ENCODE measurements at regions of chr9 and their contacts with region 1.

Region 1: DNA sequence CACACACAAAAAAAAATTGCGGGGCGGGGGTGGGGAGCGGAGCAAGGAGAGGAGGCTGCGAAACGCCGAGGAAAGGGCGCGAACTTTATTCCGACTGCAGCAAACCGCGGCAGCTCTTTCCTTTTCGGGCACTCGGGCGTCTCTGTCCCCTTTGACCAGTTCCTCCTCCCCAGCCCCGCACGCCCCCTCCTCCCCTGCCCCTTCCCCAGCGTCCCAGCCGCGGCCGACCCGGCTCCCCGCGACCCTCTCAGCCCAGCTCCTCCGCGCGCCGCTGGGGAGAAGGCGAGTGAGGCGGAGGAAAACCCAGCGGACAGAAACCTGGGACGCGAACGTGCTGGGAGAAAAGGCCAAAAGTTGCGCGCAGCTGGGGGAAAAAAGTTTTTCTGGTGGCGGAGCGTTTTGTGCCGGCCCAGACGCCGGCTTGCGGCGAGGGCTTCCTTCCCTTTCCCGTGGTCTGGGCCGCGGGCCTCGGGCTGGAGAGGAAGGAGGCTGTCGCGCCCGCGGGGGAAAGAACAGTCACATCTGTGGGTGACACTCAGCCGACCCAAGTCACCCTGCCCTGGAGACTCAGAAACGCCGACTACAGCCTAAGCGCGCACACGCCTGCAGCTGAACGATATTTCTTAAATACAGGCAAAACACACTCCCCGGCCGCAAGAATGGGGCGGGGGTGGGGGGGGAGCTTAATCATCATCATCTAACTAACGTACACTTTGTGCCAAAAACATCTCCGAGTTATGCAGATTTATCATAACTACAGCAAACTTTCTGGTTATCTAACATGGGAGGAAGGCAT is 1.1 kb upstream of the BNC2 start:
- DNase-seq: peak in 1 of 2 donors; percentile 35
- ATAC-seq: peak; percentile 24 to 34
- H3K4me3 ChIP-seq: peak overlapping the region; percentile 71 to 85 (median 76)
- H3K27ac ChIP-seq: peak overlapping the region; percentile 80 to 90 (median 84)
- H3K4me1 ChIP-seq: peaks cover 3 to 9% of the 10 kb centered on the region in 2 donors
- H3K27me3 ChIP-seq: peaks cover 0 to 4% (median 0%) of the 10 kb centered on the region in 3 donors
- CTCF ChIP-seq: no peak
- POLR2A ChIP-seq: peak; percentile 10 to 27

Region 2: DNA sequence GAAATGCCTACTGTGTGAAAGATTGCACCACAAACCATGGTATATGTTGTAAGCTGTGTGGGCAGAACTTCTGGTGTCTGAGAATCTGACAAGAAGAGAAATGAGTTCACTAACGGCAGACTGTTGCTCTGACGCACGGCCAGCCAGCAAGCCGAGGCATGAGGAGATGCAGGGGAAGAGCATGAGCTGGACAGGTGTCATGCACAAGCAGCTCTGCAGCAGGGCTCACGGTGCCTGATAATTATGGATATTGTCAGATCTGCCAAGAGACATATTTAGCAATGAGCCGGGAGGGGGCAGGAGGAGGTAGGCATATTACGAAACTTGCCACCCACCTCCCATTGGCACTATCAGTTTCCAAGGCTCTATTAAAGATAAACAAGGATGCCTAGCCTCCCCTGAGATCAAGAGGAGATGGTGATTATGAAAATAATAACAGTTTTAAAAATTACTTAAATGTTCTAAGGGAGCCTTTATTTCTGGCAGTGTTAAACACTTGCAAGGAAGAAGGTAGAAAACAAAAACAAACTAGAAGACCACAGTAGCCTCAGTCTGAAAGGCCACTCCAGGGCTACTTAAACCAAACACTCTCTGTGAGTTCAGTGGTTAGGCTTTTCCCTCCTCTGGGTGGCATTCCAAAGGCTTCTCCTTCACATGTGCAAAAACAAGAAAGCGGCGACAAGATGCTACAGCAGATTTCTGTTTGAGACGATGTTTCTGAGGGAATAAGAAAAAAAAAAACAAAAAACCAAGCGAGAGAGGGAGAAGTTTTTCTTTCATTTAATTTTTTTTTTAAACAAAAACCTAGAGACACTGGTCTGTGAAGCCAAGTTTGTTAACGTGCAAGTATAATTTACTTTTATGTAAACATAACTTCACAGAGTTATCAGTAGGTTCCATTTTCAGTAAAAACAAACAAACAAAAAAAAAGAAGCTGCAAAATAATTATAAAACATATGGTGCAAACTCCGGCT is 340.6 kb before region 1 on chr9:
- in situ Hi-C with region 1: no loop called
- intact Hi-C with region 1: loop called (anchors 5 kb)
- DNase-seq: peak; percentile 55 to 73
- ATAC-seq: peak; percentile 82 to 90
- H3K4me3 ChIP-seq: no peak overlapping the region
- H3K27ac ChIP-seq: peak overlapping the region; percentile 55 to 69 (median 61)
- H3K4me1 ChIP-seq: peaks cover 0 to 26% of the 10 kb centered on the region in 2 donors
- H3K27me3 ChIP-seq: no peaks in the 10 kb centered on the region
- CTCF ChIP-seq: no peak
- POLR2A ChIP-seq: no peak

Region 3: GRCh38 chr9:16626577-16627131 is 244.9 kb before region 1 on chr9:
- in situ Hi-C with region 1: loop called in 1 of 4 experiments (anchors 10 kb)
- intact Hi-C with region 1: no loop called
- DNase-seq: peak; percentile 60 to 78
- ATAC-seq: peak; percentile 94 to 95
- H3K4me3 ChIP-seq: peak overlapping the region in 3 of 4 donors; percentile 9 to 28 (median 19)
- H3K27ac ChIP-seq: peak overlapping the region; percentile 72 to 80 (median 79)
- H3K4me1 ChIP-seq: peaks cover 22 to 44% of the 10 kb centered on the region in 2 donors
- H3K27me3 ChIP-seq: no peaks in the 10 kb centered on the region
- CTCF ChIP-seq: no peak
- POLR2A ChIP-seq: peak in 1 of 2 donors; percentile 34

Region 4: GRCh38 chr9:17017931-17018491 is 146.5 kb after region 1 on chr9:
- in situ Hi-C with region 1: no loop called
- intact Hi-C with region 1: loop called (anchors 5 kb)
- DNase-seq: peak; percentile 68 to 93
- ATAC-seq: peak; percentile 97
- H3K4me3 ChIP-seq: peak overlapping the region in 3 of 4 donors; percentile 9 to 25 (median 16)
- H3K27ac ChIP-seq: peak overlapping the region; percentile 79 to 86 (median 82)
- H3K4me1 ChIP-seq: peaks cover 7 to 16% of the 10 kb centered on the region in 2 donors
- H3K27me3 ChIP-seq: no peaks in the 10 kb centered on the region
- CTCF ChIP-seq: no peak
- POLR2A ChIP-seq: peak; percentile 21 to 27

Region 5: DNA sequence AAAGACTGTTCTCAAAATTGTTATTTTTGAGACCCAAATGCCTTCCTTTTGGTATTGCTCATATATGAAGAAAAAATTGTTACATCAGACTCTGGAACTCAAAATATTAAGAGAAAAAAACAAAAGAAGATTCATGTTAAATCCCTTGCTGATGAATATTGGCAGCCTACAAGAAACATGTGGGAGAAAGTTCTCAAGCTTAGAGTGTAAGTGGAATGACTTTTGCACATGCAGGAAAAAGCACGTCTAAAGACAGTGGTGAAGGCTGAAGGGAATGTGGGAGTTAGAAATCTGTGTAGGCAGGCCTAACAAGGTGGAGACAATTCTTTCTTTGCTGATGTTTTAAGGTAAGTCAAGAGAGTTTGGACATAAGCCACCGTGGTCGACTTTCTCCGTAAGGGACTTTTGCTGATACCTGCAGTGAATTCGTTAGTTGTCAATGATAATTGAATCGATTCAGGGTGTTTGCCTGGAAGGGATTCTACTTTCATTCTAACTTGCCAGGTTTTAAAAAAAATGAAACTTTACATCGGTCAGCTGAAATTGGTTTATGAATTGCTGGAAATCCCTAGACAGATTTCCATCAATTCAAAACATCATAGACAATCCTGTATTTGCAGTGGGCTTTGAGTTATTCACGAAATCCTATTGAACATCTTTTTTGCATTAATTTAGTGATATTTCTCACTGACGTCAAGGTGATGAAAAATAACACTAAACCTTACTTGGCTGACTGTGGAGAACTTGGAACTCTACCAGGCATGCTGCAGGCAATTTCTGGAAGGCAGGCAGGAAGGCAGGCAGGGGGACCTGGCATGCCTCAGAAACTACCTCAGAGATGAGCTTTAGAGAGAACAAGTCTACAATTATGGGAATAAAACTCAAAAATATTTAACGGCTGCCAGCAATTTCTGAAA is 1243.3 kb after region 1 on chr9:
- in situ Hi-C with region 1: no loop called
- intact Hi-C with region 1: no loop called
- DNase-seq: no peak
- ATAC-seq: no peak
- H3K4me3 ChIP-seq: no peak overlapping the region
- H3K27ac ChIP-seq: no peak overlapping the region
- H3K4me1 ChIP-seq: no peaks in the 10 kb centered on the region
- H3K27me3 ChIP-seq: no peaks in the 10 kb centered on the region
- CTCF ChIP-seq: no peak
- POLR2A ChIP-seq: no peak

Measured in gastrocnemius medialis (tissue), 4 donors.